ENCODE measurements at regions of chr15 and their contacts with region 1.

Region 1: DNA sequence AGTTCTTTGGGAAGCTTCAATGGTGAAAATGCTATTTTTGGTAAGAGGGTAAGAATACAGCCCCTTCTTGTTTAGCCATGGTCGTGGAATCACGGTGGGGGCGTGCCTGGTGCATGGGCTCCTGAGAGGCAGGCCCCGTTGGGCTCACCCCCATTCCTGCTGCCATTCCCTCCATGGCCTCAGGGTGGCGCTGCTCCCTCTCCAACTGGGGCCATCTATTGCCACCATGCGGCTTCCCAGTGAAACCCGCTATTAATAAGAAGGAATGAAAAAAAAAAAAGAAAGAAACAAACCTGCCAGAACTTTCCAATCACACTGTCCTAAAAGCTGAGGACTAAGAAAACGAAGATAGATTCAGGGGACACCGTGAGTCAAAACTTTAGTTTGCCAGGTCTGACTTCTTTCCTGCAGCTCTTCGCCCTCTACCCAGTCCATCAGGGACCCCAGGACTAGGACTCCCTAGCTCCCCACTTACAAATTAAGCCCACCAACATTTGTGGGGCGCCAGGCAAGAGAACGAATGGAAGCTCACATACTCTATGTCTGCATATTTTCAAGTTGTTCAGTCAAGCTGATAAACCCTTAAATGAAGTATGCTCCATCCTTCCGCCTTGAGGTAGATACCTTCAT is 30.6 kb upstream of the ABHD2 start:
- DNase-seq: peak; percentile 85 to 95
- ATAC-seq: peak; percentile 95
- H3K4me3 ChIP-seq: no peak overlapping the region
- H3K27ac ChIP-seq: no peak overlapping the region
- H3K4me1 ChIP-seq: peaks cover 0 to 6% of the 10 kb centered on the region in 2 donors
- H3K27me3 ChIP-seq: no peaks in the 10 kb centered on the region

Region 2: DNA sequence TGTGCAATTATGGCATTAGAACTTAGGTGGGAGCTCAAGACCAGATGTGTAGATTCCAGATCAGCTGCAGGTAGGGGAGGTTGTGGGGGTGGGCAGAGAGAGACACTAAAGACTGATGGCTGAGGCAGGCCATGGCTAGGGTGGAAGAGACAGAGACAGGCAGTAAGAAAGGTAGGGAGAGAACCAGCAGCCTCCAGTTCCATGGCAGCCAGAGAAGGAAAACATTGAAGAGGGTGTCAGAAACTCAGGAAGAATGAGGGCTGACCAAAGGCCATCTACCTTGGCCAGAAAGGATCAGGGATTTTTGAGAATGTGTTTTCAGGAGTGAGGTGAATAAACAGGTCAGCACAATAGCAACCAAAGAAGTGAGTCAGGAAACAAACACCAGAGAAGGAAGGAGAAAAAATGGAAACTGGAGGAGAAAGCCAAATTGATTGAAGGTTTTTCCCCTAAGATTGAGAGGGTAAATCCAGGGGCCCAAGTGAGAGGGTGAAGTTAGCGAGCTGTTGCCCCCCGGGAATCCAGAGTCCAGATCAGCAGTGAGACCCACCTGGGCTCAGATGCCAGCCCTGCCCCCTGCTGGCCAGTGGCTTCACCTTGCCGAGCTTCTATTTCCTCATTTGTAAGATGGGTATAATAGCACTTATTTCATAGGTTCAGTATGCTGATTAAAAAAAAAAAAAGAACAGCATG is 71.7 kb after region 1 on chr15:
- intact Hi-C with region 1: loop called (anchors 2 to 5 kb)
- DNase-seq: peak in 1 of 2 donors; percentile 85
- ATAC-seq: no peak
- H3K4me3 ChIP-seq: no peak overlapping the region
- H3K27ac ChIP-seq: peak overlapping the region in 1 of 2 donors; percentile 50
- H3K4me1 ChIP-seq: peaks cover 6 to 10% of the 10 kb centered on the region in 2 donors
- H3K27me3 ChIP-seq: no peaks in the 10 kb centered on the region

Region 3: DNA sequence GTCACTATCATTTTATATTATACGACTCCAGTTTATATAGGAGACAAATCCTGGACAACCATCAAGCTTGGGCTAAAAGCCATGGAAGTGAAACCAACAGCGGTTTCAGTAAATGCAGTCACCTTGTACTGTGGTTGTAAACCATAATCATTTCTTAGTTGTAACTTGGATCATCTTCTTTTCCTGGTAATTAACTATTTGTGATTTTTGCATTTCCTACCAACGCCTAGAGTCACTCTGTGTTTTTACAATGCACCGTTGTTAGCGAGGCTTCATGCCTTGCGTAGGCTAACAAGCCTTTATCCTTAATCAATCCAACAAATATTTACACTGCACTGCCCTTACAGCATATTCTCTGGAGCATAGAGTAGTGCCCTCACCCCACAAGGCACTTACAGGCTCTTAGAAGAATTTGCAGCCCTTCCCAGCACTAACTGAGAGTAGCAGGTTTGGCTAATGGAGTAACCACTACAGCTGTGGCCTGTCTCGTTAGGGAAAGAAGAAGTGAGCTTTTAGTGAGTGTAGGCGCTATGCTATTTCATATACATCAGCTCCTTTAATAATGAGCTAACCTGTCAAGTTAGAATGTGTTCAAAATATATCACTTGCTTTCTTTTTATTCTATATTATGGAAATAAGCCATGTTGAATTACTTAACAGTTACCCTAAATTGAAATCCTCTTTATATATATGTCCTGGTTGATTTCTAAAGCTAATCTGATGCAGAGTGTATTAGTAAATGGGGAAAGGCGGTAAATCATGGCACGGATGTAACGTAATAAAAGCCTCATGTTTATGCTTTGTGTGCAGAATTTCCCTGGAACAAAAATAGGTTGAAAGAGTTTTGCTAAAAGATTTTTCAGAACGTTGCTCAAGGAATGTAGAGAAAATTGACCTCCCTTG is 93.4 kb after region 1 on chr15:
- intact Hi-C with region 1: no loop called
- DNase-seq: no peak
- ATAC-seq: no peak
- H3K4me3 ChIP-seq: no peak overlapping the region
- H3K27ac ChIP-seq: no peak overlapping the region
- H3K4me1 ChIP-seq: peaks cover 0 to 1% of the 10 kb centered on the region in 2 donors
- H3K27me3 ChIP-seq: no peaks in the 10 kb centered on the region